Breast epithelium (tissue), 4 donors: ENCODE measurements at regions of chr16 and their contacts with region 1.

Region 1: DNA sequence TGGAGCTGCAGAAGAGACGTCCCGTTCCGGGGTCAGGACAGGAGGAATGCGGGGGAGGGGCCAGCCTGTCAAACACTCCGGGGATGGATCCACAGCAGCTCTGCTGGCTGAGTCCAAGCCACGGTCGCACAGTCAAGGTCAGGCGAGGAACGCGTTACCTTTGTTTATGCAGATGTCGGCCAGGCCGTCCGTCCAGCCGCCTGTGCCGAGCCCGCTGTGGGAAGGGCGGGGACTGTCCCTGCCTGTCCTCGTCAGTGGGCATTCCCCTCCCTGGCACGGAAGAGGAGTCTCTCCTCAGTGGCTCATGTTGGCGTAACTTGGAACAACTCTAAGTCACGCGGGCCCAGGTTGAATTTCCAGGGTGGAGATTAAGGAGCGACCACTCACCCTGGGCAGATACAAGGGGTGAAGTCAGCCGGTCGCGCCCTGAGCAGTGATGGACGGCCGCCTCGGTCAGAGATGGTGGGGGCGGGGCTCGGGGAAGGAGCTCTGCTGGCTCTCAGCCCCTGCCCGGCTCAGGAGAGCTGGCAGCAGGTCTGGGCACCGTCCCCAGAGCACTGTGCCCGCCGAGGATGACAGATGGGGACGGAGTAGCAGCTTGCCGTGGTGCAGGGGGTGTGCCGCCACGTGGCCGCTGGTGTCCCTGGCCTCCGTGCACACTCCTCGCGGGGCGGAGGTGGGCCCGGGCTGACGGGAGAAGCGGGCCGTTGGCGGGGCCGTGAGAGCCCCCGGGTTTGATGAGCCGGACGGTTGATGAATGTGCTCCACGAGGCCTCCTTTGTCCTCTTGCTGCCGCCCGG is 7.3 kb downstream of the CACNA1H start:
- DNase-seq: peak; percentile 24 to 63
- H3K4me3 ChIP-seq: peak overlapping the region in 2 of 3 donors; percentile 26 to 53
- H3K27ac ChIP-seq: no peak overlapping the region
- H3K4me1 ChIP-seq: peaks cover 0 to 12% of the 10 kb centered on the region in 2 donors
- H3K27me3 ChIP-seq: peaks cover 9 to 100% of the 10 kb centered on the region in 2 donors
- CTCF ChIP-seq: no peak
- POLR2A ChIP-seq: no peak

Region 2: DNA sequence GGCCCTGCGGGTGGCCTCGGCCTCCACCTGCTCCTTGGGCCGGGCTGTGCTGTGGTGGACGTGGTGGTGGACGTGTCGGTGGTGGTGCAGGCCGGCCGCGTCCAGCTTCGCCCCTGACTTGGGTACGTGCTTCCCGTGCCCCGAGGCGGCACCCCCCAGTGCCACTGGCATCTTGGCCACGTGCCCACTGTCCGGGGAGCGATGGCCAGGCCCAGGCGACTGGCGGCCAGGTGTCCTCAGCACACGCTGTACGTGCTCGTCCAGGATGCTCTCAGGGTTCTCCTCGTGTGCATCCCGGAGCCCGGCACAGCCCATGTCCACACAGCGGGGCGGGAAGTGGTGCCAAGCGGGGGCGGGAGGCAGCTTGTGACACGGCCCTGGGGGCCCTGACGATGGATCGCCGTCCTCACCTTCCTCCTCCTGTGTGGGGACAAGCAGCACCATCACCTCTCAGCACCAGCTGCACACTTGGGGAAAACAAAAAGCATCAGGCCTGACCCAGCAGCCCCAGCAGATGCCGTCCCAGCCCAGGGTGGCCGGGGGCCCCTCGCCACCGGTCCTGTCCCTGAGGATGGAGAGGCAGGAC is 862.2 kb before region 1 on chr16:
- intact Hi-C with region 1: loop called (anchors 5 kb)
- DNase-seq: no peak
- H3K4me3 ChIP-seq: no peak overlapping the region
- H3K27ac ChIP-seq: no peak overlapping the region
- H3K4me1 ChIP-seq: no peaks in the 10 kb centered on the region
- H3K27me3 ChIP-seq: no peaks in the 10 kb centered on the region
- CTCF ChIP-seq: no peak
- POLR2A ChIP-seq: no peak

Region 3: DNA sequence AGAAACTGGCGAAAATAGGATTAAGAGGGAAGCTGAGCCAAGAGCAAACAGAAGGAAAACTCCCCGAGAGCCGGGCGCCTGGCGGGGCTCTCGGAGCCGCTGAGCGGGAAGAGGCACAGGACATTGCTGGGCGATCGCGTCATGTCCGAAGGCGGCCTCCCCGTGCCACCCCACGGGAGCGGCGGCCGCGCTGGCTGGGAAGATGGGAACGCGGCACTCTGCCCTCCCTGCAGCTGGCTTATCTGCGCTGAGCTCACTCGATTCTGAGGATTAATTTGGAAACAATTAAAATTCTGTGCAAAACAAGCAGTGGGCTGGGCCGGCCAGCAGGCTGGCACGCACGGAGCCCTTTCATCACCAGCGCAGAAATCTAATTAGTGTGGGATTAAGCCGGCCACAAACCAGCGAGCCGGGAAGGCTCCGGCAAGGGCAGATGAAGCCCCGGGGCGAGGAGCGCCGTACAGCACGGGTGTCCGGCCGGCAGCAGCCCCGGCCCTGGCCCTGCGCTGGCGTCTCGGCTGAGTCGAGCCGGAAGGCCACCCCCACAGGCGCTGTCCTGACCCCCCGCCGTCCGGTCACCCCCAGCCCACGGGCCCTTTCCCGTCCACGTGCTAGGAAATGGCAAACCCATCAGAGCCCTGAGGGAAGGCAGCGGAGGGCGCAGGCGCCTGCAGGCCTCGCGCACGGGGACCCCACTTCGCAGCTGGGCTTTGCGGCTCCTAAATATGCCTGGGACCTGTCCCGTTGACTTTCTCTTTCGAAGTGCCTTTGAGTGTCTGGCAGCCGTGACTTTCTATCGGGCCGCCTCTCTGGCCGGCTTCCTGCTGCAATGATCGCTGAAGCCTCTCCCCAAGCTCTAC is 140.7 kb before region 1 on chr16:
- intact Hi-C with region 1: no loop called
- DNase-seq: no peak
- H3K4me3 ChIP-seq: peak overlapping the region; percentile 26 to 60 (median 46)
- H3K27ac ChIP-seq: no peak overlapping the region
- H3K4me1 ChIP-seq: no peaks in the 10 kb centered on the region
- H3K27me3 ChIP-seq: peaks cover 16 to 50% of the 10 kb centered on the region in 2 donors
- CTCF ChIP-seq: no peak
- POLR2A ChIP-seq: no peak